Heart right ventricle (tissue), 16 donors: ENCODE measurements at regions of chr17 and their contacts with region 1.

Region 1: DNA sequence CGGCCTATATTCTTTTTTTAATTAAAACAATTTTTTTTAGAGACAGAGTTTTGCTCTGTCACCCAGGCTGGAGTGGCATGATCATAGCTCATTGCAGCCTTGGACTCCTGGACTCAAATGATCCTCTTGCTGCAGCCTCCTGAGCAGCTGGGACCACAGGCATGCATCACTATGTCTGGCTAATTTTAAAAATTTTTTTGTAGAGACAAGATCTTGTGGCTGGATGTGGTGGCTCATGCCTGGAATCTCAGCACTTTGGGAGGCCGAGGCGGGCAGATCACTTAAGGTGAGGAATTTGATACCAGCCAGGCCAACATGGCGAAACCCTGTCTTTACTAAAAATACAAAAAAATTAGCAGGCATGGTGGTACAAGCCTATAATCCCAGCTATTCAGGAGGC is 54.8 kb upstream of the MSI2 start:
- DNase-seq: no peak
- ATAC-seq: no peak
- H3K4me3 ChIP-seq: no peak overlapping the region
- H3K27ac ChIP-seq: no peak overlapping the region
- H3K4me1 ChIP-seq: no peaks in the 10 kb centered on the region
- H3K27me3 ChIP-seq: no peaks in the 10 kb centered on the region
- CTCF ChIP-seq: no peak

Region 2: GRCh38 chr17:57243171-57243948 is 41.9 kb after region 1 on chr17:
- intact Hi-C with region 1: no loop called
- DNase-seq: peak; percentile 63 to 67
- ATAC-seq: peak; percentile 37 to 86 (median 72)
- H3K4me3 ChIP-seq: no peak overlapping the region
- H3K27ac ChIP-seq: peak overlapping the region in 4 of 10 donors; percentile 19 to 37 (median 27)
- H3K4me1 ChIP-seq: peaks cover 0 to 17% (median 13%) of the 10 kb centered on the region in 9 donors
- H3K27me3 ChIP-seq: no peaks in the 10 kb centered on the region
- CTCF ChIP-seq: peak; percentile 97 to 99 (median 98)

Region 3: GRCh38 chr17:57408071-57408811 is 206.8 kb after region 1 on chr17:
- intact Hi-C with region 1: no loop called
- DNase-seq: no peak
- ATAC-seq: no peak
- H3K4me3 ChIP-seq: no peak overlapping the region
- H3K27ac ChIP-seq: no peak overlapping the region
- H3K4me1 ChIP-seq: peaks cover 2 to 58% (median 39%) of the 10 kb centered on the region in 9 donors
- H3K27me3 ChIP-seq: no peaks in the 10 kb centered on the region
- CTCF ChIP-seq: no peak

Region 4: GRCh38 chr17:57697891-57698711 is 496.6 kb after region 1 on chr17:
- intact Hi-C with region 1: loop called in 1 of 10 experiments (anchors 10 kb)
- DNase-seq: no peak
- ATAC-seq: no peak
- H3K4me3 ChIP-seq: no peak overlapping the region
- H3K27ac ChIP-seq: no peak overlapping the region
- H3K4me1 ChIP-seq: peaks cover 0 to 3% (median 0%) of the 10 kb centered on the region in 9 donors
- H3K27me3 ChIP-seq: no peaks in the 10 kb centered on the region
- CTCF ChIP-seq: no peak